ENCODE measurements at regions of chr2 and their contacts with region 1.

Region 1: GRCh38 chr2:210399440-210400041 is 77.0 kb downstream of the LANCL1 start:
- DNase-seq: peak; percentile 19
- ATAC-seq: no peak
- H3K4me3 ChIP-seq: no peak overlapping the region
- H3K27ac ChIP-seq: no peak overlapping the region
- H3K4me1 ChIP-seq: no peaks in the 10 kb centered on the region
- H3K27me3 ChIP-seq: no peaks in the 10 kb centered on the region
- CTCF ChIP-seq: peak; percentile 25; the same call in 1 of the 2 replicates
- EP300 ChIP-seq: no peak
- POLR2A ChIP-seq: no peak
- RAD21 ChIP-seq: no peak

Region 2: DNA sequence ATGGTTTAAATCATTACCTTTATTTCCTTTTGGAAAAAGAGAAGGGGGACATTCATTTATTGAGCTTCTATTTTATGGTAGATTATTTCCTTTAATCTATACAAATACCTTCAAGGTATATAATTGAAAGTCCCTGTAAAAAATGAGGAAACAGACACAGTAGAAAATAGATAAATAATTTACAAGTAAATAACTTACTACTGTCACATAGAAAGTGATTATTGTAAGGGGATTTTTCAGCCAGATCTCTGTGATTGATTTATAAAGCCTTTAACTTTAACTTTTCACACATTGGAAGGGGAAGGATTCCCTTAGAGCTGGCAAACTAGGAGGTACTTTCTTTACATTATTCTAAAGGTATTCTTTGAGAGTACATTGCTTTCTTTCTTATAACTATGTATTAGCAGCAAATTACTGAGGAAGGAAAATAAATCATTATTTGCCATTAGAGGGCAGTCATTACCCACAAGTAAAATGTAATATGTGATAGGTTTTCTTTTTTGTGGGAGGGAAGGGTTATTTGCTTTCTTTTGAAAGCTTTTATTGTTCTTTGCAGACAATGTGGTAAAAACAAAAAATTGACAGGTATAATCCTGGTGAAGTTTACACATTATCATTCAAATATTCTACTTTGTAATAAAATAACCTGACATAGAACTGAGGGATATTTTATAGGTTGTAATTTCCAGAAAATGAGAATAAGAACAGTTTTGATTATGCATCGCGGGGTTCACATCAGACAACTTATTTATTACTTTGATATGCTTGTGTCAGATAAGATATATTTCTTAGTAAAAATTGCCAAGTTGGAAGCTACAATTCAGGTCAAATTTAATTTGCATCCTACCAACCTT is 421.9 kb before region 1 on chr2:
- CTCF ChIA-PET with region 1: interaction called, 9 read pairs
- POLR2A ChIA-PET with region 1: no interaction called
- in situ Hi-C with region 1: loop called (anchors 10 kb)
- intact Hi-C with region 1: loop called (anchors 1 kb)
- DNase-seq: peak; percentile 39
- ATAC-seq: no peak; the same call in 2 of the 3 replicates
- H3K4me3 ChIP-seq: no peak overlapping the region
- H3K27ac ChIP-seq: no peak overlapping the region
- H3K4me1 ChIP-seq: no peaks in the 10 kb centered on the region
- H3K27me3 ChIP-seq: peaks cover 0 to 5% of the 10 kb centered on the region in 2 experiments; a peak in 1 of 5 replicates
- CTCF ChIP-seq: peak; percentile 68
- EP300 ChIP-seq: no peak
- POLR2A ChIP-seq: no peak
- RAD21 ChIP-seq: peak; percentile 61

Region 3: GRCh38 chr2:210128961-210129360 is 270.6 kb before region 1 on chr2:
- CTCF ChIA-PET with region 1: no interaction called
- POLR2A ChIA-PET with region 1: no interaction called
- in situ Hi-C with region 1: no loop called
- intact Hi-C with region 1: no loop called
- DNase-seq: peak; percentile 16
- ATAC-seq: peak; percentile 76
- H3K4me3 ChIP-seq: no peak overlapping the region; a peak in 1 of 6 replicates
- H3K27ac ChIP-seq: no peak overlapping the region
- H3K4me1 ChIP-seq: peaks cover 13% of the 10 kb centered on the region
- H3K27me3 ChIP-seq: no peaks in the 10 kb centered on the region
- CTCF ChIP-seq: no peak
- EP300 ChIP-seq: no peak
- POLR2A ChIP-seq: no peak
- RAD21 ChIP-seq: no peak

Region 4: DNA sequence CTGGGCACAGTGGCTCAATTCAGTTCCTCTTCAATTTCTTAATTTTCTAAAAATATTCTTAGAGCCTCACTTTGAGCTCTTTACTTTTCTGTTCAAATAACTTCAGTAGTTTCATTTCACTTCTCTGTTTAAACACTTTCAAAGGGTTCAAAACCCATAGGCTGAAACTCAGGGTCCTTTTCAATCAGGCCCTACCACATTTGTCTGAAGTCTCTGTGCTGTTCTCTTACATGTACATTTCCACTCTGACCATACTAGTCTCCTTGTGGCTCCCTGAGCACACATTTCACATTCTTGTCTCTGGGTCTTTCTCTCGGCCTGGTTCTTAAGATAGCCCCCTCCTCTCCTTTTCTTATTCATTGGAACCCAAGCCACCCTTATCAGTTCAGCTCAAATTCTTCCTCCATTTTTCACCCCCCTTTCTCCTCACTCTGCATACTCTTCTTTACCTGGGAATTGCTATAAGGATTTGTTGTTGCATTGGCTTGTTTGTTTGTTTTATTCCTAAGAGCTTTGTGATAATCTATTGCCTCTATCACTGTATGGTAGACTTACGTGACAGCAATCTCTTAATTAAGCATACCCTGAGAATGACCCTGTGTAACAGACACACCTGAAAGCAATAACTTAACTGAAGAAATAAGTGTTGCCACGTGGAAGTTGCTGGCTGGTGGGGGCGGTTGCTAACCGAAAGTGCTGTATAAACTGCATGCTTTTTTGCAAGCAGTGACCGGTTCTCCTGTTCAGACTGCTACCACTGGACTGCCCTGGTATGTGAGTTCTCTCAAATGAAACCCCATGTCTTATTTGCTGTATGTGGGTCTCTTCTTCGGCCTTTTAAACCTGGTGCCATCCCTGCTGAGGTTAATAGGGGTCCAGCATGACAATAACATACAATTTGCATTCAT is 146.6 kb before region 1 on chr2:
- CTCF ChIA-PET with region 1: interaction called, 6 read pairs
- POLR2A ChIA-PET with region 1: no interaction called
- in situ Hi-C with region 1: loop called (anchors 10 kb)
- intact Hi-C with region 1: loop called (anchors 1 kb)
- DNase-seq: no peak
- ATAC-seq: no peak; the same call in 2 of the 3 replicates
- H3K4me3 ChIP-seq: no peak overlapping the region
- H3K27ac ChIP-seq: no peak overlapping the region
- H3K4me1 ChIP-seq: no peaks in the 10 kb centered on the region
- H3K27me3 ChIP-seq: no peaks in the 10 kb centered on the region
- CTCF ChIP-seq: no peak
- EP300 ChIP-seq: no peak
- POLR2A ChIP-seq: no peak
- RAD21 ChIP-seq: no peak

Region 5: GRCh38 chr2:210337159-210337558 is 62.4 kb before region 1 on chr2:
- CTCF ChIA-PET with region 1: no interaction called
- POLR2A ChIA-PET with region 1: no interaction called
- in situ Hi-C with region 1: no loop called
- intact Hi-C with region 1: loop called (anchors 1 kb)
- DNase-seq: no peak
- ATAC-seq: peak; percentile 78
- H3K4me3 ChIP-seq: no peak overlapping the region
- H3K27ac ChIP-seq: no peak overlapping the region
- H3K4me1 ChIP-seq: no peaks in the 10 kb centered on the region
- H3K27me3 ChIP-seq: no peaks in the 10 kb centered on the region
- CTCF ChIP-seq: 0 out of 2 replicates have a peak, but pooled peaks have one; percentile 5
- EP300 ChIP-seq: no peak
- POLR2A ChIP-seq: no peak
- RAD21 ChIP-seq: no peak

Region 6: GRCh38 chr2:210376694-210377093 is 22.8 kb before region 1 on chr2:
- CTCF ChIA-PET with region 1: no interaction called
- POLR2A ChIA-PET with region 1: no interaction called
- in situ Hi-C with region 1: no loop called
- intact Hi-C with region 1: no loop called
- DNase-seq: no peak
- ATAC-seq: no peak
- H3K4me3 ChIP-seq: no peak overlapping the region
- H3K27ac ChIP-seq: no peak overlapping the region
- H3K4me1 ChIP-seq: no peaks in the 10 kb centered on the region
- H3K27me3 ChIP-seq: no peaks in the 10 kb centered on the region; a peak in 1 of 5 replicates
- CTCF ChIP-seq: no peak
- EP300 ChIP-seq: no peak
- POLR2A ChIP-seq: no peak
- RAD21 ChIP-seq: no peak